Naive thymus-derived CD8-positive, alpha-beta T cell (primary cell): ENCODE measurements at regions of chr5 and their contacts with region 1.

Region 1: DNA sequence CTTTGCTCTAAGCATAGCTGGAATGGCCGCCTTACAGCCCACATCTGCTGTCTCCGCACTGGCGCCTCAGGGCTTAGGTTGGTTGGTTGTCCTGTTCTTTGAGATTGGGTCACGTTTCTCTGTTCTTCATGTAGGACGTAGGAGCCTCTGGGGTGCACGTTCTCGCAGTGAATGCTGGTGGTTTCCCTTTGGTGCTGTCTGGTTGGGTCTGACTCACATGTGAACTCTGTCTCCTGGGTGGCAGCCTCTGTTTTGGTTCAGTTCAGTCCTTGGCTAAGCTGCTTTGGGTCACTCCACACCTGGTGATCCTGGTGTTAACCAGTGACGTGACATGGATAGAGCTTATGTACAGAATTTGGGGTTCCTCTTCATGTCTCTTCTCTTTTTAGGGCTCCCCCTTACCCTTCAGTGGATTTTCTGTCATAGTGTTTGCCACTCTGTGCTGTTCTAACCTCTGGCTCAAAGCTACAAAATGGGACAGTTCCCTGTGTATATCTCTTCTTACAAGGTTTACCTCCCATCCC is 12.6 kb upstream of the LPCAT1 start:
- DNase-seq: peak; percentile 22 to 81 (median 62)
- ATAC-seq: peak; percentile 98
- H3K4me3 Mint-ChIP-seq: peak overlapping the region; percentile 75 to 85 (median 82)
- H3K27ac Mint-ChIP-seq: peak overlapping the region; percentile 88 to 96 (median 95)
- H3K4me1 Mint-ChIP-seq: peaks cover 18 to 32% (median 29%) of the 10 kb centered on the region in 4 donors
- H3K27me3 Mint-ChIP-seq: no peaks in the 10 kb centered on the region

Region 2: GRCh38 chr5:1523771-1524480 is 12.5 kb before region 1 on chr5 and contains the start of gene LPCAT1:
- POLR2A ChIA-PET with region 1: interaction called, 13 read pairs
- DNase-seq: peak; percentile 44 to 84 (median 76)
- ATAC-seq: peak; percentile 85 to 87
- H3K4me3 Mint-ChIP-seq: peak within 1 kb of the TSS; percentile 76 to 93 (median 84)
- H3K27ac Mint-ChIP-seq: peak within 1 kb of the TSS in 9 of 10 donors; percentile 4 to 96 (median 74)
- H3K4me1 Mint-ChIP-seq: peaks cover 9 to 43% (median 21%) of the 10 kb centered on the region in 4 donors
- H3K27me3 Mint-ChIP-seq: no peaks in the 10 kb centered on the region
- polyA plus RNA-seq, gene LPCAT1: 18.6 to 46.3 (median 20.9) TPM